GM12878 (cell line): ENCODE measurements at regions of chr12 and their contacts with region 1.

Region 1: GRCh38 chr12:93403988-93404803 is 26.5 kb downstream of the NUDT4 start:
- DNase-seq: no peak
- ATAC-seq: peak; percentile 14; the same call in 1 of the 3 replicates
- H3K4me3 ChIP-seq: no peak overlapping the region
- H3K27ac ChIP-seq: no peak overlapping the region
- H3K4me1 ChIP-seq: no peaks in the 10 kb centered on the region
- H3K27me3 ChIP-seq: no peaks in the 10 kb centered on the region
- CTCF ChIP-seq: no peak
- EP300 ChIP-seq: no peak
- POLR2A ChIP-seq: peak; percentile 47; the same call in 1 of the 2 replicates
- RAD21 ChIP-seq: no peak

Region 2: DNA sequence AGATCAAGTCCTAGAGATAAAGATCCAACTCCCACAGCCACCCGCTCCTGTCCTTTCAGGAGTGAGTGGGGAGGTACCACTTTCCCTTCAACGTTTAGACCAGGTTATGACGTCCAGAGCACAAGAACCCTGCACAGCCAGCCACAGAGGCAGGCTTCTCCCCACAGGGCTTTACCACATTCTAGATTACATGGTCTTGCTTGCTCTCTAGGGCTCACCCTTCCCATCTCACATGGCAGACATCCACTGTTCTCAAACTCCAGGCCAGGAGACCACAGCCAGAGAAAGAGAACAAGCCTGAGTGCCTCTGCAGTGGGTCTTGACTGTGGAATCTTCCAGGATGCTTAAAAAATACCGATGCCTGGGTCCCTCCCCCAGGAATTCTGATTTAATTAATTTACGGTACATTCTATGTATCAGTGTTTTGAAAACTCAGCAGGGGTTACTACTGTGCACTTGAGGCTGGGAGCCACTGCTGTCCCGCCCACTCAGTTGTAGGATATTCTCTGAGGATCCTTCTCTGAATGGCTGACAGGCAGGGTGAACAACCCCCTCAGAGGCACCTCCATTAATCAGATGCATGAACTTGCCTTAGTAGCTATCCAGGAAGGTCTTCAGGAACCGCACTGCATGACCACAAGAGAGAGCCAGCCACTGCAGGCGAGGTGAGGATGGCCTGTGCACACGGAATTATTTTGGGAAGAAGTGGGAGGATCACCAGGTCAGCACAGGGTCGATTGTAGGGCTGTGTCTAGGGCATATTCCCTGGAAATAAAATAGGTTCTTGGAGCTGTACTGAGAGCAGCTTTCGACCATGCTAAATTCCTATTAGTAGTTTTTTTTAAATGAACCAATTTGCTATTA is 146.8 kb after region 1 on chr12:
- CTCF ChIA-PET with region 1: no interaction called
- POLR2A ChIA-PET with region 1: interaction called, 10 read pairs
- RAD21 ChIA-PET with region 1: no interaction called
- SMC1A ChIA-PET with region 1: no interaction called
- in situ Hi-C with region 1: no loop called
- intact Hi-C with region 1: no loop called
- DNase-seq: no peak
- ATAC-seq: no peak
- H3K4me3 ChIP-seq: no peak overlapping the region
- H3K27ac ChIP-seq: no peak overlapping the region
- H3K4me1 ChIP-seq: no peaks in the 10 kb centered on the region
- H3K27me3 ChIP-seq: no peaks in the 10 kb centered on the region
- CTCF ChIP-seq: no peak
- EP300 ChIP-seq: no peak
- POLR2A ChIP-seq: no peak
- RAD21 ChIP-seq: no peak